Activated naive CD4-positive, alpha-beta T cell treated with anti-CD3 and anti-CD28 coated beads for 36 hours (primary cell): ENCODE measurements at regions of chr6 and their contacts with region 1.

Region 1: DNA sequence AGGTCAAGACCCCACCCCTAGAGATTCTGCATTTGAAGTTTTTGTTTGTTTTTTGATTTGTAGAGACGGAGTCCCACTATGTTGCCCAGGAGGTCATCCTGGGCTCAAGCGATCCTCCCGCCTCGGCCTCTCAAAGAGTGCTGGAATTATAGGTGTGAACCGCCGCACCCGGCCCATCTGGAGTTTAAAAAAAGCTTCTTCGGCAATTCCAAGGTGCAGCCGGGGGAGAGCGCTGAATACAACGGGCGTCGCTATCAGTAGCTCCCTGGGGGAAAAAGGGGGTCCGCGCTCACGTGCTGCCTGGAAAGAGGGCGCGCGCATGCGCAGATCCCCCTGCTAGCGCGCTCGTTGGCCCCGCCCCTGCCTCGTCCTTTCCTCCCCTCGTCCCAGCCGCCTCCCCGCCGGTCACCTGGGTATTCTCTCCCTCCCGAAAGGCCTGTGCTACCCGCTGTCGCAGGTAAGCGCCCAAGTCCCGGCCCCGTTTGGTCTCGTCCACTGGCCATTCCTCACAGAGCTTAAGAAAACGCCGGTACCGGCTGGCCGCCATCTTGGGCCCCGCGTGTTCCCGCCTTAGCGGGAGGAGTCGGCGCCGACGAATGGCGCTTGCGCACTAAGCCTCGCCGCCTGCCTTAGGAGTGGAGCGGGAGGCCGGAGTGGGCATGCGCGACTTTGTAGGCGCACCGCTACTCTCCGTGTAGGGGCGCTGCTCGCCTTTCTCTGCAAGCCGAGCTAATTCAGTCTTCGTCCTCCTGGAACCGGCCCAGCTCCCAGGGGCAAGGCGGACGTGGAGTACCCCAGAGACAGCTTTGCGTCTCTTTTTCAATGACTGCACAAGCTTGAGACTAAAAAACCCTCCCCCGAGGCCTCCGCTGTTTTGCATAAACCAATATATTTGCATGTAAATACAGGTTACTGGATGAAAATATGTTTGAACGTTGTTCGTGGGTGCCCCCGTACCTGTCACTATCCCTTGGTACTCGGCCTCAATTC is at the start of gene UQCC2:
- DNase-seq: peak; percentile 98
- H3K4me3 Mint-ChIP-seq: peak within 1 kb of the TSS; percentile 95
- H3K27ac Mint-ChIP-seq: peak within 1 kb of the TSS; percentile 96
- H3K4me1 Mint-ChIP-seq: peaks cover 28% of the 10 kb centered on the region
- H3K27me3 Mint-ChIP-seq: no peaks in the 10 kb centered on the region
- total RNA-seq, gene UQCC2: 199 to 205 TPM

Region 2: DNA sequence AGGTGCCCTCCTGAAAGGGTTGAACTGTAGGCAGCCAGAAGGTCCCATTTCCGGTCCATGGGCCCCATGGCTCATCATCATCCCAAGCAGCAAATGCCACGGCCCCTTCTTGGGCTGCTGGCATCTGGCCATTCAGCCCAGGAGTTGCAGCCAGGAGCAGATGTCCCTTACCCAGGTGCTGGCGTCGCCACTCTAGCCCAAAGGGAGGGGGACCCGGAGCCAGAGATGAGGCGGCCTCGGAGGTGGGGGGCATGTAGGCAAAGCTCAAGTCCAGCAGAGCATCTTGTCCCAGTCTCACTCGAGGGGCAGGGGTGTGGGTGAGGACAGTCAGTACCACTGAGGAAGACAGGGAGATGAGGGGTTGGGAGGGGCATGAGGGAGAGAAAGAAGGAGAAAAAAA is 406.4 kb before region 1 on chr6:
- CTCF ChIA-PET with region 1: no interaction called
- intact Hi-C with region 1: no loop called
- DNase-seq: no peak
- H3K4me3 Mint-ChIP-seq: no peak overlapping the region
- H3K27ac Mint-ChIP-seq: peak overlapping the region; percentile 30
- H3K4me1 Mint-ChIP-seq: peaks cover 40% of the 10 kb centered on the region
- H3K27me3 Mint-ChIP-seq: no peaks in the 10 kb centered on the region

Region 3: GRCh38 chr6:33700391-33701050 is 10.9 kb before region 1 on chr6:
- CTCF ChIA-PET with region 1: interaction called, 31 read pairs
- intact Hi-C with region 1: no loop called
- DNase-seq: peak; percentile 89
- H3K4me3 Mint-ChIP-seq: no peak overlapping the region
- H3K27ac Mint-ChIP-seq: peak overlapping the region; percentile 26
- H3K4me1 Mint-ChIP-seq: peaks cover 49% of the 10 kb centered on the region
- H3K27me3 Mint-ChIP-seq: no peaks in the 10 kb centered on the region

Region 4: DNA sequence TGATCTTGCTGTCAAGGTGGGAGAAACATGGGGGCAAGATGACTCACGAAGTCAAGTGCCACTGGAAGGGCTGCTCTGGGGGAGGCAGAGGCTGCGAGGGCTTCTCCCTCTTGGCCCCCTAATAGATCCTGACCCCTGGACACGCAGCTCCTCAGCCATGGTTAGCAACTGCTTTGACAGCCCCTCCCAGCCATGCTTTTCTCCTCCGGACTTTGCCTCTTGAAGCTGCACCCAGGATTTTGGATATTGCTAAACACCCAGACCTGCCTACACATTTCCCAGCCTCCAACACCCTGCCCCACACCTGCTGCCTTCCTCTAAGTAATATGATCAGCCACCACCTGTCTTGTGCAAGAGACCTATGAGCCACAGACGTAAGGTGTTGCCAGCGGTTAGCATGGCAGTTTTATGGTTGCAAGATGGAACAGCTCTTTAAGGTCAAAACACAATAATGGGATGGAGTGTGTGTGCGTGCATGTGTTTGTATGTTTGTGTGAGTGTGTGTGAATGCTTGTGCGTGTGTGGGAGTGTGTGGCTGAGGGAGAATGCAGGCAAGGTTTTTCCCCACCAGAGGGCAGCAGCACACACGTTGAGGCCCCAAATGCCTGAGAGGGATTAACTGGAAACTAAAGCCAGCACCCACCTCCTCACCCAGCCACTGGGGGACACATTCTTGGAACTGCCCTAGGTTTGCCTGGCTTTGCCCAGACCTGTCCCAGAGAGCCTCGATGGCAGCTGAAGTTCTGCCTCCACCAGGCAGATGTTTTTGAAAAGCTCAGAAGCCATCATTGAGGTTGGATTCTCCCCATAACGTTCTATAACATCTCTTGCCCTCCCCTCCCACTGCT is 32.8 kb after region 1 on chr6:
- CTCF ChIA-PET with region 1: interaction called, 17 read pairs
- intact Hi-C with region 1: loop called (anchors 1 kb)
- DNase-seq: peak; percentile 83
- H3K4me3 Mint-ChIP-seq: no peak overlapping the region
- H3K27ac Mint-ChIP-seq: no peak overlapping the region
- H3K4me1 Mint-ChIP-seq: peaks cover 2% of the 10 kb centered on the region
- H3K27me3 Mint-ChIP-seq: no peaks in the 10 kb centered on the region

Region 5: GRCh38 chr6:33771146-33772081 is 60.0 kb after region 1 on chr6:
- CTCF ChIA-PET with region 1: interaction called, 10 read pairs
- intact Hi-C with region 1: no loop called
- DNase-seq: peak; percentile 63
- H3K4me3 Mint-ChIP-seq: no peak overlapping the region
- H3K27ac Mint-ChIP-seq: no peak overlapping the region
- H3K4me1 Mint-ChIP-seq: peaks cover 3% of the 10 kb centered on the region
- H3K27me3 Mint-ChIP-seq: no peaks in the 10 kb centered on the region

Region 6: DNA sequence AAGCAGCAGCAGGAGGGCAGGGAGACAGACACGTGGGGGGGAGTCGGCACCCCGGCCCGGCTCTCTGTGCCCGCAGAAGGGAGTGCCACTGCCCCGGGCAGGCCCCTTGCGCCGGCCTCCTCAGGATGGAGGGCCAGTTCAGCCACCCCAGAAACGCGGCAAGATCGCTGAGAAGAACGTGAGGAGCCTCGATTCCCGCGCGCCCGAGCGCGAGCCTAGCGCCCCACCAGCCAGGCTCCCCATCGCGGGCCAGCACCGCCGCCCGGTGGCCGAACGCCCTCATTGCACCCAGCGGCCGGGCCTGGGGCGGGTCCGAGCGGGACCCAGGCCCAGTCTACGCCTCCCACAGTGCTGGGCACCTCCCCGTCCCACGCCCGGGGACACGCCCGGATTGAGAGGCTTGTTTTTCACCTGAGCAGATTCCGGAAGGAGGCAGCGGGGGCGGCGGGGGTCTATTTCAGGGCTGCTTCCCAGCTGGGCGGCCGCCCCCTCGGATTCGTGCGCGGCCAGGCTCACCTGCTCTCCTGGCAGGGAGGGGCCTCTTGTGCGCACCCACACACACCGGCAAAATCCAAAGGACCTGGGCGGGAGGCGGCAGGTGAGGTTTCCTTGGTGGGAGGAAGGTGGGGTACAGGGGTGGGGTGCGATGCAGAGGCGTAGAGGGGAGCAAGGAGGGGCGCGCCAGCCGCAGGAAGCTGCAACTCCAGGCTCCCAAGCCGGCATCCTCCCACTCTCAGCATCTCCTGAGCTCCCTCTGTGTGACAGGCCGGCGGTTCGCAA is 443.4 kb after region 1 on chr6:
- CTCF ChIA-PET with region 1: interaction called, 3 read pairs
- intact Hi-C with region 1: loop called (anchors 10 kb)
- DNase-seq: peak; percentile 67
- H3K4me3 Mint-ChIP-seq: no peak overlapping the region
- H3K27ac Mint-ChIP-seq: no peak overlapping the region
- H3K4me1 Mint-ChIP-seq: peaks cover 8% of the 10 kb centered on the region
- H3K27me3 Mint-ChIP-seq: peaks cover 35% of the 10 kb centered on the region